Activated B cell treated with CpG ODN at 0.5 μM for 24 hours (primary cell): ENCODE measurements at regions of chr13 and their contacts with region 1.

Region 1: GRCh38 chr13:49443704-49444523 is at the starts of genes CAB39L and SETDB2:
- DNase-seq: peak; percentile 94
- ATAC-seq: peak; percentile 91
- H3K4me3 Mint-ChIP-seq: peak within 1 kb of the TSS; percentile 94
- H3K27ac Mint-ChIP-seq: peak within 1 kb of the TSS; percentile 99
- H3K4me1 Mint-ChIP-seq: peaks cover 72% of the 10 kb centered on the region
- H3K27me3 Mint-ChIP-seq: no peaks in the 10 kb centered on the region
- CTCF ChIP-seq: no peak
- total RNA-seq, gene CAB39L: 3.4 and 4.0 TPM in 2 replicates
- total RNA-seq, gene SETDB2: 23.6 and 25.1 TPM in 2 replicates

Region 2: DNA sequence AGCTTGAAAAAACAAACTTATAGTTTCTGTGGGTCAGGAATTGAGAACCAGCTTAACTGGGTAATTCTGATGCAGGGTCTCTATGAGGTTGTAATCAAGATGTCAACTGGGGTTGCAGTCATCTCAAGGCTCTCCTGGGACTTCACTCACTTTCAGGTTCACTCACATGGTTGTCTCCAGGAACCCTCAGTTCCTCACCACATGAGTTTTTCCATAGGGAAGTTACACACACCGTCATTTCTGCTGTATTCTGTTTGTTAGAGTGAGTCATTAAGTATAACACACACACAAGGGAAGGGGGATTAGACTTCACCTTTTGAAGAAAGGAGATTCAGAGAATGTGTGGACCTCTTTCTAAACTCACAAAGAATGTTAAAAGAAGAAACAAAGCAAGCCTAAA is 258.6 kb before region 1 on chr13:
- CTCF ChIA-PET with region 1: no interaction called
- POLR2A ChIA-PET with region 1: no interaction called
- intact Hi-C with region 1: no loop called
- DNase-seq: no peak
- ATAC-seq: peak; percentile 21
- H3K4me3 Mint-ChIP-seq: no peak overlapping the region
- H3K27ac Mint-ChIP-seq: peak overlapping the region; percentile 37
- H3K4me1 Mint-ChIP-seq: peaks cover 5% of the 10 kb centered on the region
- H3K27me3 Mint-ChIP-seq: no peaks in the 10 kb centered on the region
- CTCF ChIP-seq: no peak

Region 3: GRCh38 chr13:49247643-49248621 is 196.0 kb before region 1 on chr13 and contains the start of gene CDADC1:
- CTCF ChIA-PET with region 1: no interaction called
- POLR2A ChIA-PET with region 1: interaction called, 3 read pairs
- intact Hi-C with region 1: loop called (anchors 5 kb)
- DNase-seq: peak; percentile 89
- ATAC-seq: peak; percentile 95
- H3K4me3 Mint-ChIP-seq: peak within 1 kb of the TSS; percentile 99
- H3K27ac Mint-ChIP-seq: peak within 1 kb of the TSS; percentile 94
- H3K4me1 Mint-ChIP-seq: peaks cover 22% of the 10 kb centered on the region
- H3K27me3 Mint-ChIP-seq: no peaks in the 10 kb centered on the region
- CTCF ChIP-seq: no peak
- total RNA-seq, gene CDADC1: 7.4 and 10.4 TPM in 2 replicates

Region 4: GRCh38 chr13:49388256-49388655 is 55.7 kb before region 1 on chr13:
- CTCF ChIA-PET with region 1: no interaction called
- POLR2A ChIA-PET with region 1: no interaction called
- intact Hi-C with region 1: no loop called
- DNase-seq: no peak
- ATAC-seq: no peak
- H3K4me3 Mint-ChIP-seq: no peak overlapping the region
- H3K27ac Mint-ChIP-seq: no peak overlapping the region
- H3K4me1 Mint-ChIP-seq: no peaks in the 10 kb centered on the region
- H3K27me3 Mint-ChIP-seq: no peaks in the 10 kb centered on the region
- CTCF ChIP-seq: no peak

Region 5: DNA sequence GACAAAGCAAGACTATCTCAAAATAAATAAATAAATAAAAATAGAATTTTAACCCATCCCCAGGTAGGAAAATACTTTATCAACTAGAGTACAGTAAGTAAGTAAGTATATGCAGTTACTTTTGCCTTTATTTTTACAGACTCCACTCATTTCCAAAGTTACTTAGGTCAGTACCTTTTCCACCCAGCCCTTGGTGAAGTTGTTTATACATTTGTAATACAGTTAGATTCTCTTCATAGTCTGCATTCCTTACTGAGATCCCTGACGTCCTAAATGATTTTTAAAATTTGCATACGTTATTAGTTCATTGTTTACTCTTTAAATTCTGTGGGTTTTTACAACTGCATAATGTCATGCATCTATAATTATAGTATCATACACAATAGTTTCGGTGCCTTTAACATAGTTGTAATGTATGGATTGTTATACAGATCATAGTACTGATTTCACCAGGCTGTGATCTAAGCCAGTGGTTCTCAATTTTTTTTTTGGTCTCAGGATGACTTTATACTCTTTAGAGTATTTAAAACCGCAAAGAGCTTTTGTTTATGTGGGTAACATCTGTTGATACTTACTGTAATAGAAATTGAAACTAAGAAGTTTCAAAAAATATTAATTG is 10.6 kb after region 1 on chr13:
- CTCF ChIA-PET with region 1: no interaction called
- POLR2A ChIA-PET with region 1: interaction called, 30 read pairs
- intact Hi-C with region 1: no loop called
- DNase-seq: no peak
- ATAC-seq: peak; percentile 78
- H3K4me3 Mint-ChIP-seq: no peak overlapping the region
- H3K27ac Mint-ChIP-seq: peak overlapping the region; percentile 59
- H3K4me1 Mint-ChIP-seq: peaks cover 27% of the 10 kb centered on the region
- H3K27me3 Mint-ChIP-seq: no peaks in the 10 kb centered on the region
- CTCF ChIP-seq: no peak

Region 6: DNA sequence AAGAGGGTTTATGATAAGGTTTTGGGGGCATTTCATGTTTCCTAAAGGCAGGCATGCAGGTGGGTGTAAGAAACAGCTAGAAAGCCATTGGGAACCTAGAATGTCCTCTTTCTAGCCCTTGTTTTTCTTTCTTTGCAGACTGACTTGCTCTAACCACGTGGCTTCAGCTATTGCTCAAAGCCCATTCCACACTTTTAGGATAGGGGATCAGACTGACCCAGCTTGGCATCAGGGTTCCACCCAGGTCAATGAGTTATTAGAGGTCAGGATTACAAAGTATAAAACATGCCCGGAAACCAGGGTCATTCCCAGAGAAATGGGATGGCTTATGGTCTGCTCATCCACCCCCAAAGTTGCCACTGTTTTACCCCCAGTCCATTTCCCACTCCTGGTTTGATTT is 68.7 kb after region 1 on chr13:
- CTCF ChIA-PET with region 1: no interaction called
- POLR2A ChIA-PET with region 1: no interaction called
- intact Hi-C with region 1: no loop called
- DNase-seq: no peak
- ATAC-seq: no peak
- H3K4me3 Mint-ChIP-seq: no peak overlapping the region
- H3K27ac Mint-ChIP-seq: no peak overlapping the region
- H3K4me1 Mint-ChIP-seq: peaks cover 2% of the 10 kb centered on the region
- H3K27me3 Mint-ChIP-seq: no peaks in the 10 kb centered on the region
- CTCF ChIP-seq: no peak

Region 7: DNA sequence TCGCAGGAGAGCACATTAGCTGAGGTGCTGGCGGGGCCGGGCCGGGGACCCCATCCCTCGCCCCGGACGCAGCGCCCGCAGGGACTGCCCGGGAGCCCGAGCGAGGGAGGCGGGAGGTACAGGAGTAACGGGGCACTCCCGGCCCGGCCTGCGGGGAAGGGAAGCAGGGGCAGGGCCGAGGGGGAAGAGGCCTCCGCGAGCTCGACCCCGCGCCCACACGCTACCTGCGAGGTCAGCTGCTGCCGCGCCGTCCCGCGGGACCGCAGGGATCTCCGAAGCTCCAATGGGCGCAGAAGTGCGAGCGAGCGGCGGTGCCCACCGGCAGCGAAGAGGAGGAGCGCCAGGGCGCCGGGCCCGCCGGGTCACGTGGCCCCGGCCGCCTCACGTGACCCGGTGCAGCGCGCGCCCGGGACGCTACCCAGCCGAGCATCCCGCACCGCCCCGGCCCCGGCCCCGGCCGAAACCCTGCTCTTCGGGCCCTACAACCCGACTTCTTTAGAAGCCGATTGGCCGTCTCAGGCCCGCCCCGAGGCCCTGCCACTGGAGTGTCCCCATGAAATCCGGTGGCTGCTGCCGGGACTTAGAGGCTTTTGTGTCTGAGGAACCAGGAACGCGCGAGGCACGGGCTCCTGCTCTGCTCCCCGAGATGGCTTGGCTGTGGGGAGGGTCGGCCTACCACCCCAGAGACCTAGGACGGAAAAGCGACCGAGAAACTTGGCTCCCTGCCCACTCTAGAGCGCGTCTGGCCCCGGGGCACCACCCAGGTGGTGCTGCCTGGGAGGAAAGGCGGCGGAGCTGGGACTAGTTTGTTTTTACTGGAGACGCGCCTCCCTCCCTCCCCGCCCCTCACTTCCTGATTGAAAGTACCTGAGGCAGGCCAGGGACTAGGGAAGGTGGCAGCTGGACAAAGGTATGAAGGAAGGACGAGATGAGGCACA is 141.6 kb after region 1 on chr13 and contains the start of gene RCBTB1:
- CTCF ChIA-PET with region 1: no interaction called
- POLR2A ChIA-PET with region 1: interaction called, 17 read pairs
- intact Hi-C with region 1: loop called (anchors 1 kb)
- DNase-seq: peak; percentile 73
- ATAC-seq: peak; percentile 87
- H3K4me3 Mint-ChIP-seq: peak within 1 kb of the TSS; percentile 90
- H3K27ac Mint-ChIP-seq: peak within 1 kb of the TSS; percentile 86
- H3K4me1 Mint-ChIP-seq: peaks cover 31% of the 10 kb centered on the region
- H3K27me3 Mint-ChIP-seq: no peaks in the 10 kb centered on the region
- CTCF ChIP-seq: no peak
- total RNA-seq, gene RCBTB1: 19.7 and 22.6 TPM in 2 replicates

Region 8: DNA sequence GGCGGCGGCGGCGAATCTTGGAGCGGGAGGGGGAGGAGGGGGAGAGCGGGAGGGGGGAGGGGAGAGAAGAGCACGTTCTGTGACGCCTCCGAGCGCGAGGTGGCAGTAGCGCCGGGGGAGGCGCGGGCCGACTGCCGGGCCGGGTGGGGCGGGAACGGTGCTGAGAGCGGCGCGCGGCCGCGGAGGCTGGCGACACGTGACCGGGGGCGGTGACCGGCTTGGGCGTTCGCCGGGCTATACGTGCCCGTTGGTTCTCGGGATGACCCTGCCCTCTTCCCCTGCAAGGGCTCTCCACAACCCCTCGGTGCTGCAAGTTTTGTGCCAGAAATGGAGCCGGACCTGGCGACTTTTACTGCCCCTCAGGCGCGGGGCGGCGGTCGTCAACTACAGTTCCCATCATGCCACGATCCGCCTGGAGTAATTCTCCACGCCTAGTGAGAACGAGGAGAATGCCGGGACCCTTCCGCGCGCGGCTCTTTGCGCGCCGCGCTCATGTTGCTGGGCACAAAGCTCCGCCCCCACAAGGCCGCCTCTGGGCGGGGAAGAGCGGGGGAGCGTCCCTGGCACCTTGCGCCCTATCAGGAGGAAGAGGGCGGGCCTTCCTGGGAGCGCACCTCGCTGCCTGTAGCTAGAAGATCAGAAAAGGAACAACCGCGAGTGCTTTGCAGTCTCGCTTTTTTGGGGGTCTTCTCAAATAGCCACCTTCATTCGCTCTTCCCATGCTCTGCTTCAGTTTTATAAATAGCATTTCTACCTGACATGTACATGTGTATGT is 348.8 kb after region 1 on chr13 and contains the start of gene KPNA3:
- CTCF ChIA-PET with region 1: interaction called, 3 read pairs
- POLR2A ChIA-PET with region 1: interaction called, 16 read pairs
- intact Hi-C with region 1: loop called (anchors 1 kb)
- DNase-seq: peak; percentile 88
- ATAC-seq: peak; percentile 89
- H3K4me3 Mint-ChIP-seq: peak within 1 kb of the TSS; percentile 97
- H3K27ac Mint-ChIP-seq: peak within 1 kb of the TSS; percentile 97
- H3K4me1 Mint-ChIP-seq: peaks cover 31% of the 10 kb centered on the region
- H3K27me3 Mint-ChIP-seq: no peaks in the 10 kb centered on the region
- CTCF ChIP-seq: no peak
- total RNA-seq, gene KPNA3: 28.6 and 28.7 TPM in 2 replicates

Region 9: DNA sequence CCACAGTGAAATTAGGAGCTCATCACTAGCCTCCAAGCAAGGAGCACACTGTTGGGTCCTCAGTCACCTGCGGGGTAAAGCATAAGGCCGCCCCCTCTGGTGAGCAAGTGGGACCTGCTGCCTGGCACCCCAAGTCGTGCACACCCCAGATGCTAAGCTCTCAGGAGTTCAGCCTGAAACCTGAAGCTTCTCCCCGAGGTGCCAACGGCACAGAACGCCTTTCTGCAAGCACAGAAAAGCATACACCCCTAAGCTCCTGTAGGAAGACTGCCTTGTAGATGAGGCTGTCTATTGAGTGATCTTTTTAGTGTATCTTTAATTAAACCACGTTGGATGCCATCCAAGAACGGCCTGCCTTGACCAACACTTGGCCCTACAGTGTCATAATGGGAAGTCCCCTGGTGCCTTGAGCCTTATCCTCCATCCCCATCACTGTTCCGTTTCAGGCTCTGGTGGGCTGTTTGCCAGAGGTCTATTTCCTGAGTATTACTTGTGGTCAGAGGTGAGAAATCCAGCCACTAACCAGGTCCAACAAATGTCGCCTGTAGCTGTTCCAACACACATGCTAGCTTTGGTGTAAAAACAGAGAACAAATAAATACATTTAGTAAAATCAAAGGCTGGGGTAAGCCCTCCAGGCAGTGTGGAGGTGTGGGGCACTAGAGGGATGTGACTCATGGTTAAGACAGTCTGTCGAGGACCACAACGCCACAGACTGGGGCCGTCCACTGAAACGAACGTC is 1622.3 kb after region 1 on chr13:
- CTCF ChIA-PET with region 1: no interaction called
- POLR2A ChIA-PET with region 1: no interaction called
- intact Hi-C with region 1: no loop called
- DNase-seq: no peak
- ATAC-seq: no peak
- H3K4me3 Mint-ChIP-seq: no peak overlapping the region
- H3K27ac Mint-ChIP-seq: no peak overlapping the region
- H3K4me1 Mint-ChIP-seq: peaks cover 7% of the 10 kb centered on the region
- H3K27me3 Mint-ChIP-seq: peaks cover 32% of the 10 kb centered on the region
- CTCF ChIP-seq: no peak